Panc1 (cell line): ENCODE measurements at regions of chr12 and their contacts with region 1.

Region 1: GRCh38 chr12:2884810-2885209 is 5.9 kb upstream of the TULP3 start:
- DNase-seq: no peak
- ATAC-seq: peak; percentile 35; the same call in 1 of the 2 replicates
- H3K4me3 ChIP-seq: no peak overlapping the region
- H3K27ac ChIP-seq: 0 out of 2 replicates have a peak overlapping the region, but pooled peaks have one; percentile 29
- H3K4me1 ChIP-seq: peaks cover 3% of the 10 kb centered on the region; the same call in 1 of the 2 replicates
- H3K27me3 ChIP-seq: no peaks in the 10 kb centered on the region
- CTCF ChIP-seq: no peak

Region 2: DNA sequence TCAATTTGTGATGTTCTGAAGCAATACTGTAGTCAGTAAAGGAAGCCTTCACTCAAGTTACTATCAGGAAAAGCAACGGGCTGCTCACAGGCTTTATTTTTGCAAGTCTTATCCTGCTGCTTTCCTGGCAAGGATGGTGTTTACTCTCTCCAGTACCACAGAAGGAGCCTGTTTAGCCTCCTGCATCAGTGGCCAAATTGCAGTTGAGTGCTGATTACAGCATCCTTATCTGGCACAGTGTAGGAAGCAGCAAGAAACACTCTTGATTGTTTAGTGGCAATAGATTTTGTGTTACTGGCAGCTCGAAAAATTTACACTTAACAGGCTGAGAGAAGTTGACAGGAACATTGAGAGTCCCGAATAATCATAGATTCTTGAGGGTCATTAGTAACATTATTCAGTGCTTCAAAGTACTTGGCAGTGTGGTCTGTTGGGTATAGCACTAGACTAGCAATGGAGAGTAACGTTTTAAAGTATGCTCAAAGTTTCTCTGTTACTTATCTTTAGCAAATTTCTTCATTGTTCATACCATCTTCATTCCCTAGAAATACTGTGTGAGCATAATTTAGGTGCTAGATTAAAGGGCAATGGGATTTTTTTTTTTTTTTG is 17.6 kb after region 1 on chr12:
- CTCF ChIA-PET with region 1: interaction called, 16 read pairs
- POLR2A ChIA-PET with region 1: no interaction called
- in situ Hi-C with region 1: no loop called
- intact Hi-C with region 1: no loop called
- DNase-seq: no peak
- ATAC-seq: peak; percentile 68; the same call in 1 of the 2 replicates
- H3K4me3 ChIP-seq: no peak overlapping the region
- H3K27ac ChIP-seq: peak overlapping the region; percentile 3; the same call in 1 of the 2 replicates
- H3K4me1 ChIP-seq: peaks cover 22% of the 10 kb centered on the region
- H3K27me3 ChIP-seq: no peaks in the 10 kb centered on the region
- CTCF ChIP-seq: no peak

Region 3: GRCh38 chr12:2944401-2945047 is 59.7 kb after region 1 on chr12:
- CTCF ChIA-PET with region 1: interaction called, 17 read pairs
- POLR2A ChIA-PET with region 1: no interaction called
- in situ Hi-C with region 1: no loop called
- intact Hi-C with region 1: no loop called
- DNase-seq: no peak
- ATAC-seq: peak; percentile 81
- H3K4me3 ChIP-seq: peak overlapping the region in 1 of 2 experiments; percentile 28; a peak in 3 of 4 replicates
- H3K27ac ChIP-seq: no peak overlapping the region
- H3K4me1 ChIP-seq: no peaks in the 10 kb centered on the region
- H3K27me3 ChIP-seq: no peaks in the 10 kb centered on the region
- CTCF ChIP-seq: peak; percentile 84